Activated T-helper 1 cell treated with anti-CD3 and anti-CD28 coated beads, Interleukin-12 subunit alpha, Interleukin-12 subunit beta, Interleukin-2, Interleukin-4 antibody, amounts not matched to agents 30 ng/mL and 10 ng/mL and 1 ng/mL, durations not matched to agents 14 hours and 24 hours and 36 hours (primary cell): ENCODE measurements at regions of chr2 and their contacts with region 1.

Region 1: GRCh38 chr2:102028470-102028869 is 36.7 kb downstream of the IL1R2 start:
- DNase-seq: no peak
- H3K4me3 Mint-ChIP-seq: no peak overlapping the region
- H3K27ac Mint-ChIP-seq: peak overlapping the region; percentile 40
- H3K4me1 Mint-ChIP-seq: peaks cover 57% of the 10 kb centered on the region
- H3K27me3 Mint-ChIP-seq: peaks cover 2% of the 10 kb centered on the region

Region 2: DNA sequence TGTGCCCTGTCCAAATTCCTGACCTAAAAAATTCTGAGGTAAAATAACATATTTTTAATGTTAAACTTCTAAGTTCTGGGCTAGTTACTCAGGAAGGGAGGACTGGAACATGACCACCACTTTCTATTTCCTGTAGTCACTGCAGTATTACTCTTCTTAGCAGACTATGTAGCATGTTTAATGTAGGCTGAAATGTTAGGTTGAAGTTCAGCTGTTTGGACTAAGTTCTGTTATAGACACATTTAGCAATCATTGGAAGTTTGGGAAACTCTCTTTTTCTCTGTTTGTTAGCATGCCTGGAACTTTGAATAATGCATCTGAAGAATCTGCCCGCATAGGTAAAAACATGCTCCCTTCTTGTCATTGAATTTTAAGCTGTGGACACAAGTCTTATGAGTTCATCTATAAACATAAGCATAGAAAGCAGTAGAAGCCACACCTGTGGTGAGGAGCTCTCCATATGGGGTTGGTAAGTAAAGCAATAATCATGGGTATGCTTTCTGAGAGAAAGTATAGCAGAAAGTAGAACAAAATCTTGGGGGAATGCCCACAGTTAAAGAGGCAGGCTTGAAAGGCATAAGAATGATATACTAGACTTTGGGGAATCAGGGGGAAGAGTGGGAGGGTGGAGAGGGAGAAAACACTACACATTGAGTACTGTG is 15.9 kb after region 1 on chr2:
- intact Hi-C with region 1: loop called (anchors 2 kb)
- DNase-seq: no peak
- H3K4me3 Mint-ChIP-seq: no peak overlapping the region
- H3K27ac Mint-ChIP-seq: no peak overlapping the region
- H3K4me1 Mint-ChIP-seq: peaks cover 22% of the 10 kb centered on the region
- H3K27me3 Mint-ChIP-seq: peaks cover 22% of the 10 kb centered on the region